Activated B cell treated with CpG ODN at 0.5 μM for 24 hours (primary cell): ENCODE measurements at regions of chr6 and their contacts with region 1.

Region 1: DNA sequence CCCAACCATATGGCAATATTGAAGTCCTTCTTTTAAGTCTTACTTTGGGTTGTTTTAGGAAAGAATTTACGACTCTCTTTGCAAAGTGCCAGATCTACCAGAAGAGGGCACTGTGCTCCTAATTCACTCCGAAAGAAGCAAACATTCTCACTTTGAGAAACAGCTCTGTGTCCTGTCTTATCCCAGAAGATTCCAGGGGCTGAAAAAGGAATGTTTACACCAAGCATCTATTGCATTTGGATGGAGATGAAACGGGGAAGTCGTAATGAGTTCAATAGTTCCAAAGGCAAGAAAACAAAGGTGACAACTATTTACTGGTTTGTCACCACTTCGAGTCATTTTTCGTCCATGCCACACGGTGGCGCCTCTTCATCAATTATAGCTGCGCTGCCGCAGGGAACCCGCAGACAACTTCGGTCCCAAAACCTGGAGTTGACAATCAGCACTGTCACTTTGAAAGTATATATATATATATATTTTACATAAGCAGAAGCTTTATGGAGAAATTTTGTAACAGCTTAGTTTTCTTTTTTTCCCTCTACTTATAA is 121.6 kb downstream of the MOXD1 start:
- DNase-seq: peak; percentile 65
- ATAC-seq: peak; percentile 93
- H3K4me3 Mint-ChIP-seq: peak overlapping the region; percentile 86
- H3K27ac Mint-ChIP-seq: peak overlapping the region; percentile 19
- H3K4me1 Mint-ChIP-seq: no peaks in the 10 kb centered on the region
- H3K27me3 Mint-ChIP-seq: peaks cover 7% of the 10 kb centered on the region
- CTCF ChIP-seq: peak; percentile 100

Region 2: GRCh38 chr6:131923356-131923755 is 356.3 kb before region 1 on chr6:
- CTCF ChIA-PET with region 1: interaction called, 10 read pairs
- POLR2A ChIA-PET with region 1: no interaction called
- intact Hi-C with region 1: loop called (anchors 5 kb)
- DNase-seq: no peak
- ATAC-seq: peak; percentile 50
- H3K4me3 Mint-ChIP-seq: no peak overlapping the region
- H3K27ac Mint-ChIP-seq: no peak overlapping the region
- H3K4me1 Mint-ChIP-seq: no peaks in the 10 kb centered on the region
- H3K27me3 Mint-ChIP-seq: peaks cover 4% of the 10 kb centered on the region
- CTCF ChIP-seq: no peak

Region 3: DNA sequence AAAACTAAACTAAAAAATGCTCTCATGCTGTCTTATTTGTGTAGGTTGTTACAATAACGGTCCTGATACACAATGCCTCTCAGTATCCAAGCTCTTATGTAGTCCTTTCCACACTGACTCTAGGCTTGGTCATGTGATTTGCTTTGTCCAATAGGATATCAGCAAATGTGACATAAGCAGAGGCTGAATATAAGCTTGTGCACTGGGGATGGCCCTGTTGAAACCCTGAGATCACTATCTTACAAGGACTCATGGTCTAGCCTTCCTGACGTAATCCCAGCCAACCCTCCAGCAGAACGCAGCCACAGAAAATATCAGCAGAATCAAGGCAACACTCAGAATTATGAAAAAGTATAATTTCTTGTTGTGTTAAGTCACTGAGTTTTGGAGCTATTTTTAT is 183.4 kb before region 1 on chr6:
- CTCF ChIA-PET with region 1: no interaction called
- POLR2A ChIA-PET with region 1: no interaction called
- intact Hi-C with region 1: no loop called
- DNase-seq: no peak
- ATAC-seq: no peak
- H3K4me3 Mint-ChIP-seq: no peak overlapping the region
- H3K27ac Mint-ChIP-seq: no peak overlapping the region
- H3K4me1 Mint-ChIP-seq: no peaks in the 10 kb centered on the region
- H3K27me3 Mint-ChIP-seq: no peaks in the 10 kb centered on the region
- CTCF ChIP-seq: no peak

Region 4: DNA sequence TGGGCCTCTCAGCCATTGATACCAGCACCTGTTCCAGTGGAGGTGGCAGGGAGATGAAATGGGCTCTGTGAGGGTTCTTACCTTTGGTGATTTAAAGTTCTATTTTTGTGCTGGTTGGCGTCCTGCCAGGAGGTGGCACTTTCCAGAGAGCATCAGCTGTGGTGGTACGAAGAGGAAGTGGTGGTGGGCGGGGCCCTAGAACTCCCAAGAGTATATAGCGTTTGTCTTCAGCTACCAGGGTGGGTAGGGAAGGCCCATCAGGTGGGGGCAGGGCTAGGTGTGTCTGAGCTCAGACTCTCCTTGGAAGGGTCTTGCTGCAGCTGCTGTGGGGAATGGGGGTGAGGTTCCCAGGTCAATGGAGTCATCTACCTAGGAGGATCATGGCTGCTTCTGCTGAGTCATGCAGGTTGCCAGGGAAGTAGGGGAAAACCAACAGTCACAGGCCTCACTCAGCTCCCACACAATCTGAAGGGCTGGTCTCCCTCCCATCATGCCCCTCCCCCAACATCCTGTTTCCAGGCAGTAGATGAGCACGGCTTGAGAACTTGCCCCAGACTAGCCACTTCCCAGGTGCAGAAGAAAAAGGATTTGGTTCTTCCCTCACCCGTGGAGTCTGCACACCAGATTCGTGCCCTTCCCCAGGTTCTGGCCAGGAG is 75.0 kb after region 1 on chr6:
- CTCF ChIA-PET with region 1: interaction called, 18 read pairs
- POLR2A ChIA-PET with region 1: interaction called, 3 read pairs
- intact Hi-C with region 1: loop called (anchors 2 kb)
- DNase-seq: peak; percentile 80
- ATAC-seq: peak; percentile 92
- H3K4me3 Mint-ChIP-seq: peak overlapping the region; percentile 77
- H3K27ac Mint-ChIP-seq: peak overlapping the region; percentile 92
- H3K4me1 Mint-ChIP-seq: peaks cover 74% of the 10 kb centered on the region
- H3K27me3 Mint-ChIP-seq: no peaks in the 10 kb centered on the region
- CTCF ChIP-seq: no peak

Region 5: DNA sequence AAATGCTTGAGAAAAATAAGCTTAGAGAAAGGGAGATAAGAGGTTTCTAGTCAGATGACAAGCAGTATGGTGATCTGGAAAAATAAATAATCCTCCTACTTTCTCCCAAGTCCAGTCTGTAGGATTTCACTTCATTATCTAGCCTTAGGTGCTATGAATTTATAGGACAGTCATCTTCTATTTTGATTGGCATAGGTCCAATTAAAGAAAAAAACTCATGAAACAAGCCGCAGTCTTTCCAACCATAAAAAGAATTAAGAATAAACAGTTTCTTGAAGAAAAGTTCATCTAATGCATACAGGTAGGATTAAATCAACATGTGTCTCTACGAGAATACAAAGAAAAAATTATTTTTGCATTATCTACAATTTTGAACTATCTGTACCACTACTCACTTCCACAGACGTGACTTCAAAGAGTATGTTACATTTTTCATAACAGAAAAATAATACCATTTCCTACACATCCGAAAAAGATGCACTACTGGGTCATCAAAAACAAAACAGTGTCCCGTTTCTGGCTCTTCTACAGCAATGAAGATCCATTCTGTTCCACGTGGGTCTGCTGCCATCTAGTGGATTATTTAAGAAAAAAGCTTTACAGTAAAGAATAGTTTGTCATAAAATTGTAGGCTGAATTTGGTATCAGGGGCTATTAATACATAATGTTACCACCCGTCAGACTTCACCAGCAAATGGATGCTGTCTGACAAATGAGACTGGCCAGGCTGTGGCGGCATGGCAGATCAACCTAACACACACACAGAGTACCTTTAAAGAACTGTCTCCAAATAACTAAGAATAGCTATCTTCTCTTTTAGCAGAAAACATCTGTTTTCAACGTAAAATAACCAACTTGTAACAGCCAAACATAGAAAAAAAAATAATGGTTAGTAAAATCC is 204.4 kb after region 1 on chr6:
- CTCF ChIA-PET with region 1: interaction called, 147 read pairs
- POLR2A ChIA-PET with region 1: interaction called, 10 read pairs
- intact Hi-C with region 1: loop called (anchors 1 kb)
- DNase-seq: no peak
- ATAC-seq: peak; percentile 74
- H3K4me3 Mint-ChIP-seq: peak overlapping the region; percentile 61
- H3K27ac Mint-ChIP-seq: peak overlapping the region; percentile 82
- H3K4me1 Mint-ChIP-seq: peaks cover 85% of the 10 kb centered on the region
- H3K27me3 Mint-ChIP-seq: no peaks in the 10 kb centered on the region
- CTCF ChIP-seq: peak; percentile 84

Region 6: DNA sequence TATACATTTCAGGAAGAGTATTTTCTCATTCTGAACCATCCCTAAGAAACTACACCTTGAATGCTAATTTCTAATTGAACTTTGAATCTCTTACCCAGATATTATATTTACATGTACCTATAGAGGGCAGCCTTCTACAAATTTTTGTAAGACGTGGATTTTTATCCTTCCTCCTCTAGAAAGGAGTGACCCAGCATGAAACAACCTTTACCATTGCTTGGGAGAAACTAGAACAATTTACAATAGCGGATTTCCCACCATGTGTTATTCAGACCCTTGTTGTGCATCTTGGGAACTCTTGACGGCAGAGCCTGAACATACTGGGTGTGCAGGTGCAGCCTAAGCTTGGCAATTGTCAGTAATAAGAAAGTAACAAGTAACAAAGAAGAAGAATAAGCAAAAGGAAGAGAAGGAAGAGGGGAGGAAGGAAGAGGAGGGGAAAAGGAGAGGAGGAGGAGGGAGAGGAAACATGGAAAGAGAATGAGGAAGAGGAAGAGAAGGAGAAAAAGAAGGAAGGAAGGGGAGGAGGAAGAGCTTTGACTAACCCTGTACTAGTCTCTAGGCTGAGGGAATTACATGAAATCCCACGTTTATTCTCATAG is 390.1 kb after region 1 on chr6:
- CTCF ChIA-PET with region 1: interaction called, 11 read pairs
- POLR2A ChIA-PET with region 1: no interaction called
- intact Hi-C with region 1: loop called (anchors 10 kb)
- DNase-seq: no peak
- ATAC-seq: peak; percentile 68
- H3K4me3 Mint-ChIP-seq: peak overlapping the region; percentile 55
- H3K27ac Mint-ChIP-seq: no peak overlapping the region
- H3K4me1 Mint-ChIP-seq: peaks cover 5% of the 10 kb centered on the region
- H3K27me3 Mint-ChIP-seq: no peaks in the 10 kb centered on the region
- CTCF ChIP-seq: peak; percentile 49

Region 7: DNA sequence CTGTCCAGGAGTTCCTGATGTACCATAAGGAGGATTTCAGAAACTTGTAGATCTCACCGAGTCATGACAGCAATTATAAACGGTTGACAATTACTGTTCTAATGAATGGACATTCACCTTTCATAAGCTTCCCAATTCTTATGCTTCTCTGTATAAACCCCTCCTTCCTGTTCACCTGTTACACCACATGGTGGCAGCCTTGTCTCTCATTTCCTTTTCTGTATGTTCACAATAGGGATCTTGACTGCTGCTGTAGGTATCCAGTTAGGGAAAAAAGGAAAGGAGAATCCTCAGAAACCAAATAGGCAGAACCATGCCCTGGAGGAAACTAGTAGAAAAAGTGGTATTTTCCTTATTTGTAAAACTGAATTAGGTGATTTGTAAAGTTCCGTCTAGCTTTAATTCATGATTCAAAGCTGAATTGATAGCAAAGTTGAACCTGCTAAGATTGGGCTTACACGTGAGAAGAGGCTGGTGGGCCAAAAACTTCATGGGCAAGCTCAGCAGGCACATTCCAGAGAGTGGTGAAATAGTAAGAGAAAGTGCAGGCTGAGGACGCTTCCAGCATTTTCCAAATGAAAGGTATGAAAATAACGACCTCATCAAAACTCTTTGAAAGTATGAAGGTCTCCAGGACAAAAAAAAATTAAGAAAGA is 1644.4 kb after region 1 on chr6:
- CTCF ChIA-PET with region 1: no interaction called
- POLR2A ChIA-PET with region 1: no interaction called
- intact Hi-C with region 1: loop called (anchors 10 kb)
- DNase-seq: no peak
- ATAC-seq: peak; percentile 88
- H3K4me3 Mint-ChIP-seq: no peak overlapping the region
- H3K27ac Mint-ChIP-seq: no peak overlapping the region
- H3K4me1 Mint-ChIP-seq: no peaks in the 10 kb centered on the region
- H3K27me3 Mint-ChIP-seq: peaks cover 22% of the 10 kb centered on the region
- CTCF ChIP-seq: peak; percentile 56